ENCODE measurements at regions of chr9 and their contacts with region 1.

Region 1: GRCh38 chr9:93095205-93096130 is 549 bp upstream of the CARD19 start:
- DNase-seq: peak; percentile 100
- ATAC-seq: peak; percentile 83
- H3K4me3 ChIP-seq: peak overlapping the region; percentile 70 to 89
- H3K4me3 Mint-ChIP-seq: peak overlapping the region; percentile 85
- H3K27ac ChIP-seq: peak overlapping the region; percentile 90 to 98
- H3K27ac Mint-ChIP-seq: peak overlapping the region; percentile 97
- H3K4me1 ChIP-seq: peaks cover 65% of the 10 kb centered on the region
- H3K4me1 Mint-ChIP-seq: peaks cover 71% of the 10 kb centered on the region
- H3K27me3 ChIP-seq: no peaks in the 10 kb centered on the region
- H3K27me3 Mint-ChIP-seq: no peaks in the 10 kb centered on the region
- CTCF ChIP-seq: no peak

Region 2: GRCh38 chr9:91992461-91993041 is 1102.9 kb before region 1 on chr9:
- CTCF ChIA-PET with region 1: no interaction called
- POLR2A ChIA-PET with region 1: no interaction called
- intact Hi-C with region 1: no loop called
- DNase-seq: peak in 1 of 9 experiments; percentile 7
- ATAC-seq: no peak
- H3K4me3 ChIP-seq: no peak overlapping the region
- H3K4me3 Mint-ChIP-seq: no peak overlapping the region
- H3K27ac ChIP-seq: no peak overlapping the region
- H3K27ac Mint-ChIP-seq: no peak overlapping the region
- H3K4me1 ChIP-seq: no peaks in the 10 kb centered on the region
- H3K4me1 Mint-ChIP-seq: no peaks in the 10 kb centered on the region
- H3K27me3 ChIP-seq: no peaks in the 10 kb centered on the region
- H3K27me3 Mint-ChIP-seq: peaks cover 4% of the 10 kb centered on the region
- CTCF ChIP-seq: no peak

Region 3: GRCh38 chr9:92669890-92670708 is 425.4 kb before region 1 on chr9 and contains the start of gene IPPK:
- CTCF ChIA-PET with region 1: no interaction called
- POLR2A ChIA-PET with region 1: no interaction called
- intact Hi-C with region 1: loop called in 1 of 2 experiments (anchors 10 kb)
- DNase-seq: peak; percentile 93 to 99 (median 96)
- ATAC-seq: peak; percentile 93
- H3K4me3 ChIP-seq: peak within 1 kb of the TSS; percentile 87 to 98
- H3K4me3 Mint-ChIP-seq: peak within 1 kb of the TSS; percentile 96
- H3K27ac ChIP-seq: peak within 1 kb of the TSS; percentile 96
- H3K27ac Mint-ChIP-seq: peak within 1 kb of the TSS; percentile 98
- H3K4me1 ChIP-seq: peaks cover 23% of the 10 kb centered on the region
- H3K4me1 Mint-ChIP-seq: peaks cover 39% of the 10 kb centered on the region
- H3K27me3 ChIP-seq: no peaks in the 10 kb centered on the region
- H3K27me3 Mint-ChIP-seq: no peaks in the 10 kb centered on the region
- CTCF ChIP-seq: no peak
- total RNA-seq, gene IPPK: 12.2 to 12.8 TPM

Region 4: GRCh38 chr9:93028448-93029006 is 66.9 kb before region 1 on chr9:
- CTCF ChIA-PET with region 1: interaction called, 3 read pairs
- POLR2A ChIA-PET with region 1: interaction called, 15 read pairs
- intact Hi-C with region 1: loop called (anchors 1 to 2 kb)
- DNase-seq: peak; percentile 44 to 94 (median 74)
- ATAC-seq: peak; percentile 83
- H3K4me3 ChIP-seq: peak overlapping the region; percentile 21 to 35
- H3K4me3 Mint-ChIP-seq: peak overlapping the region; percentile 72
- H3K27ac ChIP-seq: peak overlapping the region; percentile 78 to 86
- H3K27ac Mint-ChIP-seq: peak overlapping the region; percentile 97
- H3K4me1 ChIP-seq: peaks cover 91% of the 10 kb centered on the region
- H3K4me1 Mint-ChIP-seq: peaks cover 86% of the 10 kb centered on the region
- H3K27me3 ChIP-seq: no peaks in the 10 kb centered on the region
- H3K27me3 Mint-ChIP-seq: no peaks in the 10 kb centered on the region
- CTCF ChIP-seq: no peak

Region 5: GRCh38 chr9:93108291-93109041 is 13.0 kb after region 1 on chr9:
- CTCF ChIA-PET with region 1: interaction called, 24 read pairs
- POLR2A ChIA-PET with region 1: interaction called, 8 read pairs
- intact Hi-C with region 1: no loop called
- DNase-seq: peak in 1 of 9 experiments; percentile 26
- ATAC-seq: no peak
- H3K4me3 ChIP-seq: no peak overlapping the region
- H3K4me3 Mint-ChIP-seq: no peak overlapping the region
- H3K27ac ChIP-seq: no peak overlapping the region
- H3K27ac Mint-ChIP-seq: no peak overlapping the region
- H3K4me1 ChIP-seq: peaks cover 47% of the 10 kb centered on the region
- H3K4me1 Mint-ChIP-seq: peaks cover 37% of the 10 kb centered on the region
- H3K27me3 ChIP-seq: no peaks in the 10 kb centered on the region
- H3K27me3 Mint-ChIP-seq: no peaks in the 10 kb centered on the region
- CTCF ChIP-seq: no peak

Region 6: DNA sequence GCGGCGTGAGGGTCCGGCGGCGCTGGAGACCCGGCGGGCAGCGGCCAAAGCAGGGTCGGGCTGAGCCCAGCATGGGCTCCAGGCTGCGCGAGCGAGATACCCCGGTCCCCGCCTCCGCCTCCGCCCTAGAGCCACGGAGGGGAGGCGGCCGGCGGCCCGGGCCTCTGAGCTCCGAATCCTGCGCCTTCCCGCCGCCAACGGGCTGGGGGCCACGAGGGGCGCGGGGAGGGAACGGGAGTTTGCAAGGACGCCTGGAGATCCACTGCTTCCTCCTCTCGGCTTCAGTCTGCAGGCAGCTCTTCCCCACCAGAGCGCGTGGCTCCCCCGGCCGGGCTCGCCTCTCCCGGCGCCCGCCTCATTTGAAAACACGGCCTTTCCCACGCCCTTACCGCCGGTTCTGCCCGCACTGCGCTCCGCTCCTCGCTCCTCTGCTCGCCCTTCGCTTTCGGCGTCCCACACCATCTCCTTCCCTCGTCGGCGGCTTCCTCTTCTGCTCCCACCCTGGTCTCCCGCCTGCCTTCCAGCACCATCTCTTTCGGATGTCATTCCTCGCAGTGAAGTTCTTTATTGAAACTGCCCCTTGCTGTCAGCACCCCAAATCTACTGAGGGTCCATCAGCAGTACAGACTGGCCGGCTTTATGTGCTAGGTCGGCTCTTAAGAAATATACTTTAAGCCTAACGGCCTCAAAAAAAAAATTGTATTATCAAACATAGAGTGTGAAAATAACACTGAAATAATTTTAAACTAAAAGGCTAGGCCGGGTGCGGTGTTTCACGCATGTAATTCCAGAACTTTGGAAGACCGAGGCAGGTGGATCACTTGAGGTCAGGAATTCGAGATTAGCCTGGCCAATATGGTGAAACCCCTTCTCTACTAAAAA is 251.0 kb after region 1 on chr9:
- CTCF ChIA-PET with region 1: no interaction called
- POLR2A ChIA-PET with region 1: no interaction called
- intact Hi-C with region 1: no loop called
- DNase-seq: peak in 1 of 9 experiments; percentile 12
- ATAC-seq: no peak
- H3K4me3 ChIP-seq: peak overlapping the region in 1 of 2 experiments; percentile 23
- H3K4me3 Mint-ChIP-seq: peak overlapping the region; percentile 73
- H3K27ac ChIP-seq: no peak overlapping the region
- H3K27ac Mint-ChIP-seq: no peak overlapping the region
- H3K4me1 ChIP-seq: peaks cover 5% of the 10 kb centered on the region
- H3K4me1 Mint-ChIP-seq: peaks cover 3% of the 10 kb centered on the region
- H3K27me3 ChIP-seq: peaks cover 14 to 15% of the 10 kb centered on the region in 2 experiments
- H3K27me3 Mint-ChIP-seq: peaks cover 26% of the 10 kb centered on the region
- CTCF ChIP-seq: no peak

Region 7: GRCh38 chr9:93566408-93567270 is 471.2 kb after region 1 on chr9:
- CTCF ChIA-PET with region 1: no interaction called
- POLR2A ChIA-PET with region 1: no interaction called
- intact Hi-C with region 1: loop called (anchors 1 to 2 kb)
- DNase-seq: peak; percentile 97 to 100 (median 99)
- ATAC-seq: peak; percentile 97
- H3K4me3 ChIP-seq: peak overlapping the region; percentile 65 to 72
- H3K4me3 Mint-ChIP-seq: peak overlapping the region; percentile 84
- H3K27ac ChIP-seq: peak overlapping the region; percentile 79 to 94
- H3K27ac Mint-ChIP-seq: peak overlapping the region; percentile 98
- H3K4me1 ChIP-seq: peaks cover 15% of the 10 kb centered on the region
- H3K4me1 Mint-ChIP-seq: peaks cover 18% of the 10 kb centered on the region
- H3K27me3 ChIP-seq: no peaks in the 10 kb centered on the region
- H3K27me3 Mint-ChIP-seq: no peaks in the 10 kb centered on the region
- CTCF ChIP-seq: peak; percentile 95

Region 8: GRCh38 chr9:94289691-94290090 is 1194.2 kb after region 1 on chr9:
- CTCF ChIA-PET with region 1: no interaction called
- POLR2A ChIA-PET with region 1: no interaction called
- intact Hi-C with region 1: loop called in 1 of 2 experiments (anchors 5 kb)
- DNase-seq: no peak
- ATAC-seq: no peak
- H3K4me3 ChIP-seq: no peak overlapping the region
- H3K4me3 Mint-ChIP-seq: no peak overlapping the region
- H3K27ac ChIP-seq: no peak overlapping the region
- H3K27ac Mint-ChIP-seq: no peak overlapping the region
- H3K4me1 ChIP-seq: no peaks in the 10 kb centered on the region
- H3K4me1 Mint-ChIP-seq: no peaks in the 10 kb centered on the region
- H3K27me3 ChIP-seq: no peaks in the 10 kb centered on the region
- H3K27me3 Mint-ChIP-seq: no peaks in the 10 kb centered on the region
- CTCF ChIP-seq: no peak